CD8-positive, alpha-beta T cell (primary cell): ENCODE measurements at regions of chr11 and their contacts with region 1.

Region 1: DNA sequence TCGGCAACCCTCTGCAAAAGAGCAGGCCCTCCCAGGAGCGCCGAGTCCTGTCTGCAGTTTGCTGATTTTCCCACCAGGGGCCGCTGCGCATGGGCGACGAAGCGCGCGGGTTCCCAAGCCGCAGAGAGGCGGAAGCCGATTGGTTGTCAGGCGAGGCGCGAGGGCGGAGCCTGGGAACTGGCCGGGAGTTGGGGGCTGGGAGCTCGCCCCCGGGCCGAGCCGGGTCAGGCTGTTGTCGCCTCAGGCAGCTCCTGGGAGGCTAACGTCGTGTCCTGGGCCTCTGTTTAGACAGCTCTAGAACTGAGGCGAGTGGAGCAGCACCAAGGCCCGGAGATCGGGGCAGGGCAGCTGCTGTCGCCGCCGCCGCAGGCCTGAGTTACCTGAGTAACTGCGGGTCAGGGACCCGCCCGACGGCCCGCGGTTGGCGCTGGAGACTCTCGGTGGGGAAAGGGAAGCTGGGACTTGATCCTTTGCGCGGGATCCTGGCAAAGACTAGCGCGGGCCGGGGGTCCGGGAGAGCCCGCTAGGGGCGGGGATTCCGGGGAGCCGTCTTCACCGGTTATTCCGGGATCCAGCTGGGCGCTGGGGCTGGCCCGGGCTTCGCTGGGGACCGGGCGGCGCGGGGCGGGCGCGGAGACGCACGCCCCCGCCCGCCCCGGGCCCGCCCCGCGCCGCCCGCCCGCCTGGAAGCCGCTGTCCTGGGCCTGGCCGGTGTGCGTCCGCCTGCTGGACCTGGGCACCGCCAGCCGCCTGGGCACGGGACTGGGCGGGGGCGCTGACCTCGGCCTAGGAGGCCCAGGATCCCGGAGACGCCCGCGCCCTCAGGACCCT is at the start of gene STIM1:
- DNase-seq: peak; percentile 95 to 99 (median 97)
- ATAC-seq: peak; percentile 73
- H3K4me3 ChIP-seq: peak within 1 kb of the TSS; percentile 79 to 98
- H3K4me3 Mint-ChIP-seq: peak within 1 kb of the TSS; percentile 93
- H3K27ac ChIP-seq: peak within 1 kb of the TSS; percentile 83 to 95
- H3K27ac Mint-ChIP-seq: peak within 1 kb of the TSS; percentile 99
- H3K4me1 ChIP-seq: peaks cover 61% of the 10 kb centered on the region
- H3K4me1 Mint-ChIP-seq: peaks cover 63% of the 10 kb centered on the region
- H3K27me3 ChIP-seq: no peaks in the 10 kb centered on the region
- H3K27me3 Mint-ChIP-seq: no peaks in the 10 kb centered on the region
- CTCF ChIP-seq: peak; percentile 87
- total RNA-seq, gene STIM1: 72.5 to 84.3 TPM

Region 2: DNA sequence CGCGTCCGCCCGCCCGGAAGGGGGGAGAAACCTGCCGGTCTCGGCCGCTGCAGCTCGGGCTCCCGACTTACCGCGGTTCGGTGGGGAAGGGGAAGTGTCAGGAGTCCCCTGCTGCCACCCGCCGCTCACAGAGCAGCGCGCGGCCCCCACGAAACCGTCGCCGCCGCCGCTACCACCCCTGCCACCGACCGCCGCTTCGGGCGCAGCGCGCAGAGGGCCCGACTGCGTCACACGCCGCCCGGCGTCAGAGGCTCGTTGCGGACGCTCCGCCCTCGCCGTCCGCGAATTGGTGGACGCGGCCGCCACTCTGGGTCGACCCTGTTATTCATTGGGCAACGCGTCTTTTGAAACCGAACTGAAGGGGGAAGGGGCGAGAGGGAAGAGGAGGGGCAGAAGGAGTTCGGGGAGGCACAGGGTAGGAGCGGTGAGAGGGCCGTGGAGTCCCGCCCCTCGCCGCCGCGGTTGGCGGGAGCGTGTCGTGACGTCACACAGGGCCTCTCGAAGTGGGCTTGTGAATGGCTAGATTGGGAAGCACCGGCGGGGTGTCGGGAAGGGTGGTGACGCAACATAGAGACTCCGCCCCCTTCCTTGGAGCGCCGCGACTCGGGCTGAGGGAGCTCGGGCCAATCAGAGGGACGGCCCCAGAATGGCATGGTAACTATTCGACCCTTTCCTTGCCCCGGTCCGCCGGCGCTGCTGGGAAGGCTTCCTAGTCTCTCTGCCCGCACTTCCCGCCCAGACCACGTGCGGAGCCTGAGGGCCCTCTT is 57.7 kb before region 1 on chr11 and contains the start of gene NUP98:
- CTCF ChIA-PET with region 1: interaction called, 7 read pairs
- POLR2A ChIA-PET with region 1: interaction called, 12 read pairs
- intact Hi-C with region 1: loop called in 1 of 2 experiments (anchors 1 kb)
- DNase-seq: peak; percentile 99 to 100 (median 99)
- ATAC-seq: peak; percentile 92
- H3K4me3 ChIP-seq: peak within 1 kb of the TSS; percentile 80 to 96
- H3K4me3 Mint-ChIP-seq: peak within 1 kb of the TSS; percentile 96
- H3K27ac ChIP-seq: peak within 1 kb of the TSS; percentile 94 to 99
- H3K27ac Mint-ChIP-seq: peak within 1 kb of the TSS; percentile 100
- H3K4me1 ChIP-seq: peaks cover 37% of the 10 kb centered on the region
- H3K4me1 Mint-ChIP-seq: peaks cover 47% of the 10 kb centered on the region
- H3K27me3 ChIP-seq: no peaks in the 10 kb centered on the region
- H3K27me3 Mint-ChIP-seq: no peaks in the 10 kb centered on the region
- CTCF ChIP-seq: no peak
- total RNA-seq, gene NUP98: 204 to 210 TPM

Region 3: DNA sequence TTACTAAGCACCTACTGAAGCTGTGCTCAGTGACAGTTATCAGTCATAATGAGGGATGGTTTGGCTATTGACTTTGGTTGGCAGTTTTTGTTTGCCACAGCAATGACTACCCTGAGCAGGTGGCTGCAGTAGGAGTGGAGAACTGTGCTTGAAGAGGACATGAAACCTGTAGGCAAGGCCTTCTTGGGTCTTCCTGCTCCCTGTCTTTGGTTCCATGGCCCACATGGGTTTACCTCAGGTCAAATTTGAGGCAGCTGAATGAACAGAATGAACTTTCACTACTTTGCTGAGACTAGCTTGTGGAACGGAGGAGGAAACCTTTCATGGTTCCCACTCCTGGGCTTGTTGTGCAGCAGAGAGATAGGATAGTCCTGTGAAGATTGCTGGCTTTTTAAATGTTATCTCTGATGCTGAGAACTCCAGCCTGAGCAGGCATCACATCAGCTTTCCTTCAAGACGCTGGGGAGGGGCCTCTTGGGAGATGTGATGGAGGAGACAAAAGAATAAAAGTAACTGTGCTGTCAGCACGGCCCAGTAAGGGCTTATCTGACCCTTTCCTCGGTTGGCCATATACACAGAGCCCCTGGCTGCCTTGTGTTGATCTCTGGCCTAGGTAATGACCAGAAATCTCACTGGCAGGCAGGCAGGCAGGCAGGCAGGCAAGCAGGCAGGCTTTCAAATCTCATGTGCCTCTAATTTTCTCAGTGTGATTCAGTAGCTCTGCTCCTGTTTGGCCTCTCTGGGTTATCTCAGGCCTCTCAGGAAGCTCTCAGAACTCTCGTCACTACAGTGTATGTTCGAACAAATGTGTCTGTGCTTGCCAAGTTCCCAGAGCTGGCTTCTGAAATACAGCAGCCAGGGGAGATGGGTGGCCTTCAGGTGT is 12.3 kb after region 1 on chr11:
- CTCF ChIA-PET with region 1: interaction called, 63 read pairs
- POLR2A ChIA-PET with region 1: interaction called, 38 read pairs
- intact Hi-C with region 1: no loop called
- DNase-seq: peak in 1 of 9 experiments; percentile 39
- ATAC-seq: peak; percentile 46
- H3K4me3 ChIP-seq: no peak overlapping the region
- H3K4me3 Mint-ChIP-seq: peak overlapping the region; percentile 71
- H3K27ac ChIP-seq: peak overlapping the region in 1 of 2 experiments; percentile 66
- H3K27ac Mint-ChIP-seq: peak overlapping the region; percentile 80
- H3K4me1 ChIP-seq: peaks cover 90% of the 10 kb centered on the region
- H3K4me1 Mint-ChIP-seq: peaks cover 86% of the 10 kb centered on the region
- H3K27me3 ChIP-seq: no peaks in the 10 kb centered on the region
- H3K27me3 Mint-ChIP-seq: no peaks in the 10 kb centered on the region
- CTCF ChIP-seq: no peak

Region 4: GRCh38 chr11:3893311-3893710 is 38.1 kb after region 1 on chr11:
- CTCF ChIA-PET with region 1: interaction called, 12 read pairs
- POLR2A ChIA-PET with region 1: interaction called, 4 read pairs
- intact Hi-C with region 1: no loop called
- DNase-seq: no peak
- ATAC-seq: no peak
- H3K4me3 ChIP-seq: no peak overlapping the region
- H3K4me3 Mint-ChIP-seq: no peak overlapping the region
- H3K27ac ChIP-seq: no peak overlapping the region
- H3K27ac Mint-ChIP-seq: peak overlapping the region; percentile 88
- H3K4me1 ChIP-seq: peaks cover 35% of the 10 kb centered on the region
- H3K4me1 Mint-ChIP-seq: peaks cover 71% of the 10 kb centered on the region
- H3K27me3 ChIP-seq: no peaks in the 10 kb centered on the region
- H3K27me3 Mint-ChIP-seq: no peaks in the 10 kb centered on the region
- CTCF ChIP-seq: no peak

Region 5: GRCh38 chr11:3927133-3927796 is 72.1 kb after region 1 on chr11:
- CTCF ChIA-PET with region 1: interaction called, 15 read pairs
- POLR2A ChIA-PET with region 1: interaction called, 4 read pairs
- intact Hi-C with region 1: no loop called
- DNase-seq: no peak
- ATAC-seq: no peak
- H3K4me3 ChIP-seq: no peak overlapping the region
- H3K4me3 Mint-ChIP-seq: no peak overlapping the region
- H3K27ac ChIP-seq: no peak overlapping the region
- H3K27ac Mint-ChIP-seq: peak overlapping the region; percentile 1
- H3K4me1 ChIP-seq: peaks cover 19% of the 10 kb centered on the region
- H3K4me1 Mint-ChIP-seq: peaks cover 60% of the 10 kb centered on the region
- H3K27me3 ChIP-seq: no peaks in the 10 kb centered on the region
- H3K27me3 Mint-ChIP-seq: no peaks in the 10 kb centered on the region
- CTCF ChIP-seq: no peak

Region 6: GRCh38 chr11:3954448-3955298 is 99.5 kb after region 1 on chr11:
- CTCF ChIA-PET with region 1: interaction called, 11 read pairs
- POLR2A ChIA-PET with region 1: interaction called, 5 read pairs
- intact Hi-C with region 1: no loop called
- DNase-seq: no peak
- ATAC-seq: no peak
- H3K4me3 ChIP-seq: no peak overlapping the region
- H3K4me3 Mint-ChIP-seq: peak overlapping the region; percentile 1
- H3K27ac ChIP-seq: no peak overlapping the region
- H3K27ac Mint-ChIP-seq: peak overlapping the region; percentile 95
- H3K4me1 ChIP-seq: peaks cover 68% of the 10 kb centered on the region
- H3K4me1 Mint-ChIP-seq: peaks cover 85% of the 10 kb centered on the region
- H3K27me3 ChIP-seq: no peaks in the 10 kb centered on the region
- H3K27me3 Mint-ChIP-seq: no peaks in the 10 kb centered on the region
- CTCF ChIP-seq: no peak

Region 7: DNA sequence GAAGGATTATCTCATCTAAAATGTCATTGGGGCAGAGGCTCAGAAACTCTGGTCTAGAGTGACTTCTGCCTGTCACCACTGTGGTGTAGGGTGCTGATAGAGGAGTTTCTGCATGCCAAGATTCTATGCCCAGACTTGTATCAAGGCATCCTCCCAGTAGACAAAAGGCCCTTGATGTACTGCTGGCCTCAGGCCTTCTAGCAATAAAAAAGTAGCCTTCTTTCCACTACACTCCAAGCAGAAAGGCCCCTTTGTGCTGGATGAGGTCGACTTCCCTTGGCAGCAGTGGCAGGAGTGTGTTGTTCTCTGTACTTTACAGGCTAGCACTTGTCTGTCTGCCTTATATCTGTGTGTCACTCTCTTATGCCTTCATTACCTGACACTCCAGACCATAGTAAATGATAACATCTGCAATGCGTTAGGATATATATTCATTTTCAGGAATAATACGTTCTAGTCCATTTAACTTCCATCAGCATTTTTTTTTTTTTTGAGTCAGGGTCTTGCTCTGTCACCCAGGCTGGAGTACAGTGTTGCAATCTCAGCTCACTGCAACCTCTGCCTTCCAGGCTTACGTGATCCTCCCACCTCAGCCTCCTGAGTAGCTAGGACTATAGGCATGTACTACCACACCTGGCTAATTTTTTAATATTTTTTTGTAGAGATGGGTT is 189.9 kb after region 1 on chr11:
- CTCF ChIA-PET with region 1: interaction called, 20 read pairs
- POLR2A ChIA-PET with region 1: interaction called, 3 read pairs
- intact Hi-C with region 1: no loop called
- DNase-seq: no peak
- ATAC-seq: no peak
- H3K4me3 ChIP-seq: no peak overlapping the region
- H3K4me3 Mint-ChIP-seq: no peak overlapping the region
- H3K27ac ChIP-seq: no peak overlapping the region
- H3K27ac Mint-ChIP-seq: peak overlapping the region; percentile 70
- H3K4me1 ChIP-seq: peaks cover 8% of the 10 kb centered on the region
- H3K4me1 Mint-ChIP-seq: peaks cover 45% of the 10 kb centered on the region
- H3K27me3 ChIP-seq: no peaks in the 10 kb centered on the region
- H3K27me3 Mint-ChIP-seq: no peaks in the 10 kb centered on the region
- CTCF ChIP-seq: no peak